ENCODE measurements at regions of chr1 and their contacts with region 1.

Region 1: GRCh38 chr1:171644805-171645483 is 7.5 kb downstream of the MYOC start:
- DNase-seq: peak; percentile 29
- H3K4me3 ChIP-seq: no peak overlapping the region
- CTCF ChIP-seq: peak; percentile 85

Region 2: DNA sequence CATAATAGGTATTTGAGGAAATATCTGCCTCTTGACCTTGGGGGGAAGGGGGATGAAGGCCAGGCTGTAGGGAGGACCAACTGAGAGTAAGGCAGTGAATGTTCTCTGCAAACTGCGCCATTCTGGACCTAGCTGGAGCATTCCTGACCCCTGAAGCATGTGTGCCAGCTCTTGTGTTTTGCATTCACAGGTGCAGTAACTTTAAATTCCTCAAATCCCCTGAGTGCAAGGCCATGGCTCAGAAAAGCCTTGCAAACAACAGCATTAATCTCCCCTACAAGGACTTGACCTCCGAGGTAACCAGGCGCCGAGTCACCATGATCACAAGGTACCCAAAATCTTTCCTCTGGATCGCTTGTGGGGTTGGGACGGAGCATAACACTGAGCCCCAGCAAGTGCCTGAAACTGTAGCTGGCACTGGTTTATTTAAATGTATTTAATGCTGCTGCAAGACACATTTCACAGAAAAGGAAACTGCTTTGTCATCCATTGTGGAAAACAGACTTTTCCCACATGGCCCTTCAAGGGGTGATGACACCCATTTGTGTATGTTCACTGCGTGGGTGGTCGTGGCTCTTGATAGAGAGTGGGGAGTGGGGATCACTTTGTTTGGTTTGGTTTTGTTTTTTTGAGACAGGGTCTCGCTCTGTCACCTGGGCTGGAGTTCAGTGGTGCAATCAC is 21.2 kb before region 1 on chr1:
- CTCF ChIA-PET with region 1: interaction called, 13 read pairs
- POLR2A ChIA-PET with region 1: no interaction called
- DNase-seq: no peak
- H3K4me3 ChIP-seq: no peak overlapping the region
- CTCF ChIP-seq: no peak

Region 3: DNA sequence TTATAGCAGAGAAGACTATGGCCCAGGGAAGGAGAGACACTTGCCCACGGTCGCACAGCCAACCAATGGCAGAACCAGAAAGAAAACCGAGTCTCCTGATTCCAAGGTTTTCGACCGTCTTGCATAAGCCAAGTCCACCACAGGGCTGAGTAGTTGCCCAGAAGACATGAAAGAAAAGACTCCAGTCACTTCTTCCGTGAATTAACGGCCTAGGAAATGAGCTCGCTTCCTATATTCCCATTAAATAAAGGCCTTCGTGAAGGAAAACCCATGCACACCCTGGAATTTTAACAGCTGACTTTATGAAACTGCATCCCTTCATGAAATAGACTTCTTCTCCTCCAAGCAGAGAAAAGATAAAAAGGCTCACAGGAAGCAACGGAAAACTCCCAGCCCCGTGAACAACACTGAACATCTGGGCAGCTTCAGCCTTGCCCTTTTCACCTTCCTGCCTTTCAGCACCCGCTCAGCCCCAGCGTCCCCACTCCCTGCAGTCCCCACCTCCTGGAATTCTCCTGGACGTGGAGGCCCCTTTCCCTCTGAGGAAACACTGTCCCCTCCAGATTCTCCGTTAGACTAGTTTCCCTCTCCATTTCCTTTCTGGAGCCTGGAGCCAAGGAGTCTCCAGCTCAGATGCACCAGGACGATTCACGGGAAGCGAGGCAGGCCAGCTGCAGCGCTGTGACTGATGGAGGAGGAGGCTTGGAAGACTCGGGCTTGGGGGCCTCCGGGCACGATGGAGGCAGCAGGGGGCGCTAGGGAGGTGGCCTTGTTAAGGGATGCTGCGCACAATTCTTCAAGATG is 10.2 kb after region 1 on chr1:
- CTCF ChIA-PET with region 1: interaction called, 61 read pairs
- POLR2A ChIA-PET with region 1: no interaction called
- DNase-seq: no peak
- H3K4me3 ChIP-seq: no peak overlapping the region
- CTCF ChIP-seq: peak; percentile 75

Region 4: DNA sequence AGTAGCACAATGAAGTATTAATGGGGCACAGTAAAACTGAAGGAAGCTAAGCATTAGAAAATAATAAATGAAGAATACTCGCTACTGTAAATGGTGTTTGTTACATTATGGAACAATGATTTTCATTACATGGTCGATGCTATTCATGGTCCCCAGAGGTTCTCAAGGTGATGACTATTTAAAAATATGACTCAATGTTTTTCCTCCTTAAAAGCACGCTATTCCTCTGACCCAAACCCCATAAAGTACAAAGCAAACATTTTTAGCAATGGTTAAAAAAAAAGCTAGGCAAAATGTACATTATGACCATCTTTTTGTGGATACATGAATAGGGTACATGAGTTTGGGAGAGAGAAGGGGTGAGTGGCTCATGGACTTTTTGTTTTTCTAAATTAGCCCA is 62.6 kb after region 1 on chr1:
- CTCF ChIA-PET with region 1: interaction called, 29 read pairs
- POLR2A ChIA-PET with region 1: no interaction called
- DNase-seq: no peak
- H3K4me3 ChIP-seq: no peak overlapping the region
- CTCF ChIP-seq: no peak

Region 5: DNA sequence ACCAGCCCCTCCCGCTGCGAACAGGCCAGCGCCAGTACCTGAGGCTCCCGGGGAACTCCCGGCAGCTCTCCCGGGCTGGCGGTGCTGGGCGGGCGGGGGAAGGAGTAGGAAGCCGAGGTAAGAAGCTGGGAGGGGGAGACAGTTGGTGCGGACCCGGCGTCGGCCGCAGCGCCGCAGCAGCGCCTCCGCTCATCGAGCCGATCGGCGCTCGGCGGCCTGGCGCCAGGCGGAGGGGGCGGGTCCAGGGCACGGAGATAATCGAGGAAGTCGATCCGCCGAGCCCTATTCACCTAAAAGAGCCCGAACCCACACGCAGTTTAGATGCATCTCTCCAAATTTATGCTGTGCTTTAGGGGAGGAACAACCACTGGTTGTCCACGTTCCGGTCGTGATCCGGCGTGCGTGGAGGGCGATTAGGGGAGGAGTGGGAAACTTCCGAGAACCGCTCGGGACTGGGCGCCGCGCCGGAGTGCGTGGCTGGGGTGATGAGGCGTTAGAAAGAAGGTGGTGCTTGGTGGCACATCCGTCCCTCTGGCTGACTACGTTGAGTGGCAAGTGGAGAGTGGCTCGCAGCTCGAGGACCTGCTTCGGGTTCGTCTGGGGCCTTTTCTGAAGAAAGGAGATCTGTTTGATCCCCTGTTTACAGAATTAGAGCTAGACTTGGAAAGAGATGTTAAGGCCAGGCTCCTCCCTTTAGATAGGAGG is 97.1 kb after region 1 on chr1 and contains the start of gene VAMP4:
- CTCF ChIA-PET with region 1: interaction called, 13 read pairs
- POLR2A ChIA-PET with region 1: interaction called, 3 read pairs
- DNase-seq: no peak
- H3K4me3 ChIP-seq: peak within 1 kb of the TSS; percentile 89
- CTCF ChIP-seq: no peak

Region 6: DNA sequence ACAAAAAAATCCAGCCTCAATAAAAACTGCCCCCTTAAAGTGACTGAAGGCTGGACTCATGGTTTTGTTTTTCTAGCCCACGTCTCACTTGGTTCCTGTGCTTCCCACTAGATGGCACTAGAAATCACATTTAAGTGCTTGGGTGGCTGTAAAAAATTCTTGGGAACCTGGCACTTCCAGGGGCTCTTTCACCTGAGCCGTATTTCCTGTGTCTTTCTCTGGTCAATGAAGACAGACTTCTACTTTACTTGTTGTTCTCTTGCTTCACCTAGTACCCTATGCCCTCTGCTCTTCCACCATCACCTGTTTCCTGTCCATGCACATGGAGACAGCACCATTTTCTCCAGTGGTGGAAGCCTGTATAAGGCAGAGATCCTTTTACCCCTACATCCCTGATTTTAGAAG is 156.5 kb after region 1 on chr1:
- CTCF ChIA-PET with region 1: interaction called, 63 read pairs
- POLR2A ChIA-PET with region 1: no interaction called
- DNase-seq: no peak
- H3K4me3 ChIP-seq: no peak overlapping the region
- CTCF ChIP-seq: peak; percentile 72